Tibial artery (tissue), 4 donors: ENCODE measurements at regions of chr18 and their contacts with region 1.

Region 1: DNA sequence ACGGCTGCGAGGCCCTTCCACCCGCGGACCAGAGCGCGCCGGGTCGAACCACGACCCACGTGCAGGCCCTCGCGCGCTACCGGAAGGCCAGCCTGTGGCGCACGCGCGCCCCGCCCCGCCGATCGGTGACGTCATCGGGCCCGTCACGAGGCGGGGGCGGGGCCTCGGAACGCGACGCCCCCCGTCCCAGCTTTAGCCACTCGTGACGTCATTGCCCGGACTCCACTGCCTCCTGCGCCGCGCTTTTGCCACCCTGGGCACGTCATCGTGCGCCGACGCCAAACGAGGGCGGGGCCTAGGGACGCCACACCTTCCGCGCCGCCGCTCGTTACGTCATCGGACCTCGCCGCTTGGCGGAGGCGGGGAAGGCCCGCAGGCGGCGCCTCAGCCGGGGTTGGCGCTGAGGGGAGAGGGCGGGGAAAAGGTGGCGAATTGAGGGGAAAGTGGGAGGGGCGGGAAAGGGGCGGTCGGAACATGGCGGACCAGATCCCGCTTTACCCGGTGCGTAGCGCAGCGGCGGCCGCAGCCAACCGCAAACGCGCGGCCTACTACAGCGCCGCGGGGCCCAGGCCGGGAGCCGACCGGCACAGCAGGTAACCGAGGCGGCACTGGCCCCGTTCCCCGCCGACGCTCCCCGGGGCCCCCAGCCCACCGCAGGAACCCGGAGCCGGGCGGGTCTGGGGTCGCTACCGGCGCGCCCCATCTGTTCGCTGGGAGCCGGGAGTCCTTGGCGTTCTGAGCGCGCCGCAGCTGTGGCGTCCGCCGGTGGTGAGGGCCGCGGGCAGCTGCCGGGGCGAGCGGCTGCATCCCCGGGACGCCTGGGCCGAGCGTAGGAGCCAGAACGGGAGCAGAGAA is at the start of gene ATP9B:
- DNase-seq: peak; percentile 95 to 99
- H3K4me3 ChIP-seq: peak within 1 kb of the TSS; percentile 99 to 100
- H3K27ac ChIP-seq: peak within 1 kb of the TSS; percentile 98
- H3K4me1 ChIP-seq: peaks cover 0 to 14% (median 11%) of the 10 kb centered on the region in 4 donors
- H3K27me3 ChIP-seq: no peaks in the 10 kb centered on the region
- CTCF ChIP-seq: no peak

Region 2: GRCh38 chr18:78999937-79000336 is 69.2 kb before region 1 on chr18:
- intact Hi-C with region 1: no loop called
- DNase-seq: no peak
- H3K4me3 ChIP-seq: no peak overlapping the region
- H3K27ac ChIP-seq: no peak overlapping the region
- H3K4me1 ChIP-seq: no peaks in the 10 kb centered on the region
- H3K27me3 ChIP-seq: peaks cover 0 to 9% of the 10 kb centered on the region in 2 donors
- CTCF ChIP-seq: no peak

Region 3: DNA sequence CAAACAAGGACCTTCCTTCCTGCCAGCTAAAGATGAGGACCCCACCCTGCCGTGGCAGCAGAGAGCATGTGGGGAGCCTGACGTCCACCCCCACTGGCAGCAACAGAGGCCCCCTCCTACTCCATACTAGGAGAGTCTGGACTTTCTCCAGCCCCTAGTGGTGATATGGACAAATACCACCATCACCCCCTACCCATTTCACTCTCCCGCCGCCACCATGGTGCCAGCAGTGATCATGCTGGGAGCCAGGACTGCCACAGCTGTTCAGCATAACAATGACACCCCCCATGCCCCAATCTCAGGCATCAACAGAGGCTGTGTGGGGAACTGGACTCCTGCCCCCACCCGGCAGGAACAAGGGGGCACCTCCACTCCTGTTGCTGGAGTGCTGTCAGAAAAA is 42.7 kb before region 1 on chr18:
- intact Hi-C with region 1: no loop called
- DNase-seq: no peak
- H3K4me3 ChIP-seq: no peak overlapping the region
- H3K27ac ChIP-seq: no peak overlapping the region
- H3K4me1 ChIP-seq: no peaks in the 10 kb centered on the region
- H3K27me3 ChIP-seq: peaks cover 0 to under 1% of the 10 kb centered on the region in 2 donors
- CTCF ChIP-seq: no peak

Region 4: DNA sequence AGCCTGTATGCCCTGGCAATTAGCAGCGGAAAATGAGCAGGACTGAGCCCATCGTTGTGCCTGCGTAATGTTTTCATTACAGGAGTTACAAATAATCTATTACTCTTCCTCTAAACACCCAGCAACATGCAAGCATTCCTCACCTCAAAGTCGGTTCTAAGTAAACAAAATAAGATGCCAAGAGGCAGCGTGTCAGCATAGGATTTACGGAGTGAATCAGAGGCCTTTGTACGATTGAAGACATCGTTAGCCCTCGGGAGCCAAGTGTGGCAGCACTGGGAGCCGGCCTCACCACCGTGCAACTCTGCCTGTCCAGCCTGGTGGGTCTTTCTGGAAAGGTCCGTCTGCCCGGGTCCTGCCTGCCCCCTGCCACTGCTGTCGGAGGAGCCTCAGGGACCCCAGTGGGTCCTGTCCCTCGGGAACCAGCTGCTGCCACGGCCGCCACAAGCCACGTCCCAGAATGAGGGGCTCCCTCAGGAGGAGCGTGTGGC is 530.3 kb after region 1 on chr18:
- intact Hi-C with region 1: loop called (anchors 10 kb)
- DNase-seq: peak; percentile 9 to 53
- H3K4me3 ChIP-seq: no peak overlapping the region
- H3K27ac ChIP-seq: no peak overlapping the region
- H3K4me1 ChIP-seq: no peaks in the 10 kb centered on the region
- H3K27me3 ChIP-seq: peaks cover 0 to 2% of the 10 kb centered on the region in 2 donors
- CTCF ChIP-seq: no peak